PC-3 (cell line): ENCODE measurements at regions of chr6 and their contacts with region 1.

Region 1: DNA sequence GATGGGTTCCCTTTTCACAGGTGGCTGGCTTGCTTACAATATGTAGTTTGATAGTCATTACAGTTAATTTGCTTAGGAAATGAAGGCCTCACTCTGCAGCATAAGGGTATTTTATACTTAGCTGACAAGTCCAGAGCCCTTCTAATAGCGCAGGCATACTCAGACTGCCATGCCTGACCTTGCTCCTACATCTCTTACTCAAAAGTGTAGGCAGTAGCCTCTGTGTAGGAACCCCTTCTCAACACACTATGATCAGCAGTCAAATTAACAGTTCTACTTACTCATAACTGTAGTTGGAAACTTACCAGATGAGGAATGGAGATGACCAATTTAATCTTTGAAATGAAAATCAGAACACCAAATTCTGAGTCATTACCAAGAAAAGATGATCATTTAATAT is 373.5 kb downstream of the TBC1D32 start:
- DNase-seq: no peak
- ATAC-seq: no peak
- H3K4me3 ChIP-seq: no peak overlapping the region
- H3K27ac ChIP-seq: no peak overlapping the region
- H3K4me1 ChIP-seq: no peaks in the 10 kb centered on the region
- H3K27me3 ChIP-seq: no peaks in the 10 kb centered on the region
- CTCF ChIP-seq: no peak

Region 2: DNA sequence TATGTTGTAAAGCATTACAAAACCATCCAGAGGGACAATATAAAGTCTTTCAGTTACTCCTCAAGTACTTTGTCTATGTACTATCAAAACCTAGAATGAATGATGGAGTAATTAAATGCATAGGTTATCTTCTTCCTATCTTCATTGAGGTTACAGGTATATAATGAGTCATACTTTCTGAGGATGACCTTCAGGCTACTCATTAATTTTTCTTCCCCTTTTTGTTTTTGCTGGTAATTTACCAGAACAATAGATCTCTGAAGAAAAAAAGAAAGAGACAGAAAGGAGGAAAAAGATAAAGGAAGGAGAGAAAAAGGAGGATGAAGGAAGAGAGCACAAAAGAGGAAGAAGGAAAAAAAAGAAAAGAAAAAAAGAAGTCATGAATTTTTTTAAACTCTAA is 24.9 kb before region 1 on chr6:
- CTCF ChIA-PET with region 1: no interaction called
- POLR2A ChIA-PET with region 1: no interaction called
- intact Hi-C with region 1: loop called (anchors 1 kb)
- DNase-seq: no peak
- ATAC-seq: no peak
- H3K4me3 ChIP-seq: no peak overlapping the region
- H3K27ac ChIP-seq: no peak overlapping the region
- H3K4me1 ChIP-seq: no peaks in the 10 kb centered on the region
- H3K27me3 ChIP-seq: no peaks in the 10 kb centered on the region
- CTCF ChIP-seq: no peak